Activated CD8-positive, alpha-beta T cell treated with anti-CD3 and anti-CD28 coated beads, Interleukin-2, amount 10 ng/mL, durations not matched to agents 7 days and 5 days (primary cell): ENCODE measurements at regions of chr1 and their contacts with region 1.

Region 1: DNA sequence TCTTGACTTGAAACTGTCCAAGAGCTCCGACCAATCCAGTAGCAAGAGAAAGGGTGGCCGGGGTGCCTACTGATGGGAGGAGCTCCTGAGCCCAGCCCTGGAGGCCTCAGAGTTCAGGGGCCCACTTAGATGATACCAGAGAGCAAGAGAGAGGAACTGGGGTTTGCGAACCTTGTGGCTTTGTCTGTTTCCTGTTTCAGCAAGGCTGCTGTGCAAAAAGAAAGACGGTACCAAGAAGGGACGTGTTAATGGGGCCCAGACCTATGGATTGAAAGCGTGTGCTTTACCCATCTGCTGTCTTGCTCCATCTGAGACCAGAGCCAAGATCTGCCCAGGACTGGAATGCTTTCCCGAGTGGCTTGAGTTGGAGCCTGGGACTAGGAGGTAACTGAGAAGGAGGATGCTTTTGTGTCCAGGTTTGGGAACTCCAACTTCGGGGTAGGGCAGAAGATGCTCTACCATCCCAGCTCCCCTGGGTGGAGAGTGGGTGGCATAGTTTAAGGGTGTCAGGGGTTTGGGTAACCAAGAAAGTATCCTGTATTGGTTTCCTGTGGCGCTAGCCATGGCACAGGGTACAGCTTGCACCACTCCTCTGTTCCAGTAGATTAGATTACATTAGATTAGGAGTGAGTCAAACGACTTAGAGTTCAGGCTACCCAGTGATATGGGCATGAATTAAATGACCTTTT is at the start of gene TRAF3IP3:
- DNase-seq: peak; percentile 92
- ATAC-seq: peak; percentile 86
- H3K4me3 Mint-ChIP-seq: peak within 1 kb of the TSS; percentile 93
- H3K27ac Mint-ChIP-seq: peak within 1 kb of the TSS; percentile 97
- H3K4me1 Mint-ChIP-seq: peaks cover 73% of the 10 kb centered on the region
- H3K27me3 Mint-ChIP-seq: no peaks in the 10 kb centered on the region
- total RNA-seq, gene TRAF3IP3: 319 to 322 TPM

Region 2: DNA sequence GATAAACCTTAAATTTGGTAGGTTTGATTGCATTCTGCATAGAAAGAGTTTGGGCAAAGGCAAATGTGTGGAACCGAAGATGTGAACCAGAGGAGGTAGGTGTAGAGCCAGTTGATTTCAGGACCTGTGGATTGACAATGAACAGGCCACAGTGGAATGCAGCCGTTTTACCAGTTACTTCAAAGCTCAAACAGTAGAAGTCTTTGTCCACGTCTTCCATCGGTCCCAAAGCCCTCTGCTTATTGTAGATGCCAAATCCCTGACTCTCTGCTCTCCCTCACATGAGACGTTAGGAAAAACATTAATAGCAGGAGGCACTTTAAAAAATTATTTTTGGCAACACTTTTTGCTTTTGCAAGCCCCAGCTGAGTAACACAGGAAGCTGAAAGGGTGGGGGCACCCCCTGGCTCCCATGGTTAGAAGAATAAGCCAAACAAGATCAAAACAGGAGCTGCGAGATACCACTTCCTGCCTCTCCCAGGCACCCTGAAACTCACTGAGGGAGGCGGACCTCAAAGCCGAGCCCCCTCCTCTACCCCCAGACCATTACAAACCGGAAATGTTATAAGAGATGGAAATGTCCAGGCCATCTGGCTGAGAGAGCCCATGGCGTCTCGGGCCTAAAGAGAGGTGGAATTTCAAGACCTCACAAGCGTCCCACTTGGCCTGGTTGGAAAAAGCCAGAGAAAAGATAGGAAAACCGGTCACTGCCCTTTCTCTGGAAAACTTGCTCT is 13.3 kb after region 1 on chr1:
- CTCF ChIA-PET with region 1: interaction called, 336 read pairs
- POLR2A ChIA-PET with region 1: interaction called, 241 read pairs
- DNase-seq: peak; percentile 89
- ATAC-seq: peak; percentile 58
- H3K4me3 Mint-ChIP-seq: no peak overlapping the region
- H3K27ac Mint-ChIP-seq: no peak overlapping the region
- H3K4me1 Mint-ChIP-seq: peaks cover 36% of the 10 kb centered on the region
- H3K27me3 Mint-ChIP-seq: no peaks in the 10 kb centered on the region

Region 3: DNA sequence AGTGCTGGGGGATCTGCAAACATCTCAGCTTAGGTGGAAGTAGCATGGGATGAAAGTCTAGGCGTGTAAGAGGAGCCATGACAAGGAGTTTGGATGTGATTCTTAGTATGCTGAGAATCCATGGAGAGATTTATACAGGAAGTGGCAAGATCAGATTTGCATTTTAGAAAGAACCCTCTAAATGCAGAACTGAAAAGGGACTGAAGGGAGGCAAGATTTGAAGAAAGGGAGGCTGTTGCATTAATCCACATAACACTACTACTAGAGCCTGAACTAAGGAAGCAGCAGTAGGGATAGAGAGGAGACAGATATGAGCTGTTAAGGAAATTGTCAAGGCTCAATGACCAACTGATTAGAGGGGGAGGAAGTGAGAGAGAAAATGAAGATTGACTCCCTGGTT is 18.5 kb after region 1 on chr1:
- CTCF ChIA-PET with region 1: interaction called, 336 read pairs
- POLR2A ChIA-PET with region 1: interaction called, 241 read pairs
- DNase-seq: no peak
- ATAC-seq: no peak
- H3K4me3 Mint-ChIP-seq: no peak overlapping the region
- H3K27ac Mint-ChIP-seq: peak overlapping the region; percentile 61
- H3K4me1 Mint-ChIP-seq: peaks cover 3% of the 10 kb centered on the region
- H3K27me3 Mint-ChIP-seq: no peaks in the 10 kb centered on the region

Region 4: DNA sequence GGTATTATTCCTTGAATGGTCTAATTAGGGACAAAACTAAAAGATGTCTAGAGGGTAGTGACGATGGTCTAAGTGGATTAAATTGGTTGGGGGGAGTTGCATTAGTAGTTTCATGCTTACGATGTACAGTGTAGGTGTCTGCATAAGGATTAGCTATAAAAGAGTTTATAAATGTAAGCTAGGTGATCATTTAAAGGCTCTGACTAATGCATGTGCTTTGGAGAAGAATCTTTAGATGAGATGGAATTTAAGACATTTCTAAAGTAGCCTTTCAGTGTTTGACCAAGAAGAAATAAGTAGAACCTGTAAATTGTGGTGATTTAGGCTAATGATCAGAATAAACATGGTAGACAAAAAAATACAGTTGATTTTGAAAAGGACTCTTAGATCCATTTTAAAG is 189.3 kb after region 1 on chr1:
- CTCF ChIA-PET with region 1: no interaction called
- POLR2A ChIA-PET with region 1: no interaction called
- DNase-seq: no peak
- ATAC-seq: no peak
- H3K4me3 Mint-ChIP-seq: no peak overlapping the region
- H3K27ac Mint-ChIP-seq: no peak overlapping the region
- H3K4me1 Mint-ChIP-seq: no peaks in the 10 kb centered on the region
- H3K27me3 Mint-ChIP-seq: peaks cover 9% of the 10 kb centered on the region